AG04450 (cell line): ENCODE measurements at regions of chr21 and their contacts with region 1.

Region 1: DNA sequence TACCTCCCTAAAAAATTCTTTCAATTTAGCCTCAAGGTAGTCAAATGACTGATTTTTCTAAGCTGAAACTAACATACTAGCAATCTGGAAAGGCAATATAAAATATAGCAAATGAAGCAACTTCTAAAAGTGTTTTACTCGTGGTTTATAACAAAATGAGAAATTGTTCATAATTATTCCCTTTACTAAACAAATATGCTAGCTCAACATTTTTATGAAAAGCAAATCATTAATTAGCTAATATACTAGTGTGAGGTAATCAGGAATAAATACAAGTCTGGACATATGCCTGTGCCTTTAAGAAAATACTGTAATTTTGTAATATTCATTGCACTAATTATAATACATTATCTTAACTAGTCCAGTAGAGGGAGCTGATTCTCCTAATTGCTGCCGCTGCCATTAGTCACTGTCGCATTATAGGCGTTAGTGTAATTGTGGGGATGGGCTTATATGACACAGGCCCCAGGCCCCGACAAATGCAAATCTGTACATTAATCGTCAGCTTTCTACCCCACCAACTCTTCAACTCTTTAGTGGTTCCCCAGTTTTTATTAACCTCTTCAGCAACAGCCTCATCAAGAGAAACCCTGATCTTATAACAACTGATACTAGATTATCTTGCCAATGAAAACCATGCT is 160.9 kb downstream of the GABPA start:
- DNase-seq: no peak
- H3K4me3 ChIP-seq: no peak overlapping the region
- H3K27ac ChIP-seq: no peak overlapping the region
- H3K27me3 ChIP-seq: no peaks in the 10 kb centered on the region
- CTCF ChIP-seq: peak; percentile 63

Region 2: DNA sequence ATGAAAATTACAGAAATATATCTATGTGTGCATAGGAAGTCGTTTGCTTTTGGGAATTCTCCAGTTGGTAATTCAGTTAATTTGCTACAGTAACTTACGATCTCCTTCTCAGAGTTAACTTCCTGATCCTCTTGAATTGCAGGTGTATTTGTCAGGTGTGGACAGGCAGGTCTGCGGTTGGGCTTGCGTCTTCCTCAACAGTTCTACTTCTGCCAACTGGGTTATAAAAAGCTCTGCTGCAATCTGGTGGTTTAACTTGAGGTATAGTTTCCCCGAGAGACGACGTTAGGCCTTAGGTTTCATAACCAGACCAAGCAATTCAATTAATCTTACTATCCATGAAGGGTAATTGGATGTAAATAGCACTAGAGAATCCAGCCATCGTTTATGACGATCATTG is 72.7 kb before region 1 on chr21:
- CTCF ChIA-PET with region 1: no interaction called
- POLR2A ChIA-PET with region 1: no interaction called
- DNase-seq: no peak
- H3K4me3 ChIP-seq: no peak overlapping the region
- H3K27ac ChIP-seq: no peak overlapping the region
- H3K27me3 ChIP-seq: no peaks in the 10 kb centered on the region
- CTCF ChIP-seq: no peak

Region 3: DNA sequence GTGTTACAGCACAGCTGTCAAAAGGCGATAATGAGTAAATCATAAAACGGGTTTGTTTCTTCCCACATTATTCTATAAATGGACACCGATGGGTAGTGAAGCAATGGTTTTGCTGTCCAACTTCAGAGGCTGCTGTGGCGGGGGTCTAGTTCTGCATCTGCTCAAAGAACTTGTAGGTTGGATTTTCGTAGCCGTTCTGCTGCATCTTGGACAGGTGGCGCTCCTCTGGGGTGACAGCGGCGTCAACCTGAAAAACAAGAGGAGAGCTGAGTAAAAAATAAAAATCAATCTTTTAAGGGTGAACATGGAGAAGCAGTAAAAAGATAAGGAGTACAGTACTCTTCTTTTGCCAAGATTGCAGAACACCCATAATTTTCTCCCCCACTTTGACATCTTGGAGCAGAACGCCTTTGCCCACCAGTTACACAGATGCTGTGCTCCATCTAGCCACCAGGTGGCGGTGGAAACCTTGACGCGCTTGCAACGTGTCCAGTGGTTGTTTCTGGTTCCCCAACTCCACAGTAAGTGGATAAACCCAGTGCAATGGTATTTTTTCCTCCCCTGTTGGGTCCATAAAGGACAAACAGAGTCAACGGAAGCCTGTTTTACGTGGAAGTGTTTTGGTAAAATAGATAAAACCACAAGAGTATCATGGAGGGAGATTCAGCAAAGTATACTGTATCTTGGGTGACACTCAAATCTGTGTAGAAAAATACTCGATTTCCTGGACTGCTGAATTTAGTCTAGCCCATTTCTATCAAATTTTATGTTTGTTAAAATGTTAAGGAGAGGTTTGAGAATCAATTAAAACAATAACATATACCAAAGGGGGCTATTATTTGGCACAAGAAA is 13.9 kb before region 1 on chr21:
- CTCF ChIA-PET with region 1: interaction called, 14 read pairs
- POLR2A ChIA-PET with region 1: no interaction called
- DNase-seq: peak; percentile 16
- H3K4me3 ChIP-seq: no peak overlapping the region
- H3K27ac ChIP-seq: no peak overlapping the region
- H3K27me3 ChIP-seq: no peaks in the 10 kb centered on the region
- CTCF ChIP-seq: peak; percentile 97

Region 4: GRCh38 chr21:25907573-25908275 is 12.0 kb after region 1 on chr21:
- CTCF ChIA-PET with region 1: interaction called, 29 read pairs
- POLR2A ChIA-PET with region 1: no interaction called
- DNase-seq: no peak
- H3K4me3 ChIP-seq: no peak overlapping the region
- H3K27ac ChIP-seq: no peak overlapping the region
- H3K27me3 ChIP-seq: no peaks in the 10 kb centered on the region
- CTCF ChIP-seq: no peak

Region 5: DNA sequence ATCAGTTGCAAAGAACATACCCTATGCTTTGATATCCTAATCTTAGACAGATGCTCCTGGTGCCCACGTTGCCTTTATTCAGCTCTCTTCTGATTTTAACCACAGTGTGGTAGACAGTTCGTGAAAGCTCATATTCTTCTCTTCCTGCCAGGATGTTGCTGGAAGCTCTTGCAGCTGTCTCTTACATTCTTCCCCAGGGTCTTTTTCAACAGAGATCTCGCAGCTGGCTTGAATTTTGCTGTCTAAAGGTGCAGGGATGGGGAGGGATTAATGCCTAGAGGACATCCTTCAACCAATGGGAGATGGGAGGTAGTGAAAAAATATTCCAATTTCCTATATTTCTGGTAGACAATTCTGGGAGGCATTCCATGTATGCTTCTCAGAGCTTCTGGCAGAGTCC is 424.9 kb after region 1 on chr21:
- CTCF ChIA-PET with region 1: no interaction called
- POLR2A ChIA-PET with region 1: no interaction called
- DNase-seq: no peak
- H3K4me3 ChIP-seq: no peak overlapping the region
- H3K27ac ChIP-seq: no peak overlapping the region
- H3K27me3 ChIP-seq: no peaks in the 10 kb centered on the region
- CTCF ChIP-seq: no peak

Region 6: DNA sequence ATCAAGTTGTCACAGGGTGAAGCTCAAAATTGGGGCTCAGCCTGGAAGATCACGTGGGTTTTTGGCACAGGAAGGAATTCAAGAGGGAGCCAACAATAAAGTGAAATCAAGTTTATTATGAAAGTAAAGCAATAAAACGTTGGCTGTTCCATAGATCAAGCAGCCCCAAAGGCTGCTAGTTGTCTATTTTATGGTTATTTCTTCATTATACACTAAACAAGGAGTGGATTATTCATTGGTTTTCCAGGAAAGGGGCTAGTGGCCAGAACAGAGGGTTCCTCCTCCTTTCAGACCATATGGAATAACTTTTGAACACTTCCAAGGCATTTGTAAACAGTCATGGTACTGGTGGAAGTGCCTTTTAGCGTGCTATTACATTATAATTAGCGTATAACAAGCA is 1794.7 kb after region 1 on chr21:
- CTCF ChIA-PET with region 1: no interaction called
- POLR2A ChIA-PET with region 1: no interaction called
- DNase-seq: no peak
- H3K4me3 ChIP-seq: no peak overlapping the region
- H3K27ac ChIP-seq: no peak overlapping the region
- H3K27me3 ChIP-seq: no peaks in the 10 kb centered on the region
- CTCF ChIP-seq: no peak